ENCODE measurements at regions of chr10 and their contacts with region 1.

Region 1: DNA sequence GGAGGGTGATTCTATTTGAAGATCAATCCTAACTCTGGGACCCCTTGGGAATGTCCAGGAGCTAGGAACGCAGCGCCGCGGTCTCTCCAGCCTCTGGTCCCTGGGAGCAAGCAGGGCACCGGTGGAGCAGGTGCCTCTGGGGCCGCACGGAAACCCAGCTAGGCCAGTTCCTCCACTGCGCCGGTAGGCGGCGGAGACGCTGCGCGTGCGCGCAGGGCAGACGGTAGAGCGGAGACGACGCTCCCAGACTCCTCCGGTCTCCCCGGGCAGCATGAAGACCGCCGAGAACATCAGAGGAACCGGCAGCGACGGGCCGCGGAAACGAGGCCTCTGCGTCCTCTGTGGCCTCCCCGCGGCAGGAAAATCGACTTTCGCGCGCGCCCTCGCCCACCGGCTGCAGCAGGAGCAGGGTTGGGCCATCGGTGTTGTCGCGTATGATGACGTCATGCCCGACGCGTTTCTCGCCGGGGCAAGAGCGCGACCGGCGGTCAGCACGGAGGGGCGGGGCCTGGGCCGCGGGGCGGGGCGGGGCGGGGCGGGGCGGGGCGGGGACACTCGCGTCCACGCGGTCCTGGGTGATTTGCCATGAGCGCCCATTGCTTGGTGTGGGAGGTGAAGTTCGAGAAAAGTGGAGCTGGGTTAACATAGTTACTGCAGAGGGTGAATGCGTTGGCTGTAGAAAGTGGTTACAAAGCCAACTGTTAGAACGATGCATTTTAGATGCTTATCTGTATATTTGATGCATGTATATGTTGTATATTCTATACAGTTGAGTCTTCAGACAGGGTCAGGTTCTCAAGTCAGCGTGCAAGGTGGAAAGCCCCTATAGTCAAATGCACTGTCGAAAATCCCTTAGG is at the start of gene PSTK:
- DNase-seq: peak; percentile 92
- H3K4me3 ChIP-seq: peak within 1 kb of the TSS; percentile 36 to 80 (median 55)
- H3K27ac ChIP-seq: peak within 1 kb of the TSS; percentile 82
- H3K4me1 ChIP-seq: peaks cover 8% of the 10 kb centered on the region
- H3K27me3 ChIP-seq: peaks cover 0 to 1% of the 10 kb centered on the region in 2 experiments
- CTCF ChIP-seq: peak; percentile 84 to 97
- POLR2A ChIP-seq: peak; percentile 56
- total RNA-seq, gene PSTK: 1.6 and 2.7 TPM in 2 replicates

Region 2: DNA sequence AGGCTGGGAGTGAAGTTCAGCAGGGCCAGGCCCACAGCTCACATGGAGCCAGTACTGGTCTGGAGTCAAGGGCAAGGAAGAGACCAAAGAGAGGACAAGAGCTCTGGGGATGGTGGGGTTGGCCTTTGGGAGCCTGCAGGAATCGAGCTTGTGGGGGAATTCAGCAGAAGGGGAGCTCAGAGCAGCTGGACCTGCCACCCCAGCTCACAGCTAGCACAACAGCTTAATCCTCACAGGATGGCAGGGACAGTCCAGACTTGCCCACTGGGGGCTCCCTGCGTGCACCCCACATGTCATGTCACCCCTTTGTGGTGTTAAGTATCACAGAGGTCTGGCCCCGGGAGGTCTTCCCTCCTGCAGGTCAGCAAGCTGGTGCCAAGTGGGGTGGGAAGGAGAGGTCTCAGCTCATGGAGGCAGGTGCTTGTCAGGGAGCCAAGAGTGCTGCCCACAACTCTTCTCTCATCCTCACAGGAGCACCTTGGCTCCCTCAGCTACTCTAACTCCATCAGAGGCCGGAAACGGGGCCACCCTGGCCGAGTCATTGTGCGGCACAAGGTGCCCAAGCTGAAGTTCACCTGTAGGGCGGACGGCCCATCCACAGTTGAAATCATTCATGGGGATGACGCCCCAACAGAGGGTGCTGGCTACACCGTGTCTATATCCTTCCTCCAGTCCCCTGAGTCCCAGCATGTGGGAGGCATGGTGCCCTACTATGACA is 157.3 kb before region 1 on chr10:
- CTCF ChIA-PET with region 1: no interaction called
- POLR2A ChIA-PET with region 1: no interaction called
- dilution Hi-C with region 1: no loop called
- intact Hi-C with region 1: no loop called
- DNase-seq: no peak
- H3K4me3 ChIP-seq: no peak overlapping the region
- H3K27ac ChIP-seq: no peak overlapping the region
- H3K4me1 ChIP-seq: no peaks in the 10 kb centered on the region
- H3K27me3 ChIP-seq: peaks cover 2 to 23% of the 10 kb centered on the region in 2 experiments
- CTCF ChIP-seq: no peak
- POLR2A ChIP-seq: no peak

Region 3: DNA sequence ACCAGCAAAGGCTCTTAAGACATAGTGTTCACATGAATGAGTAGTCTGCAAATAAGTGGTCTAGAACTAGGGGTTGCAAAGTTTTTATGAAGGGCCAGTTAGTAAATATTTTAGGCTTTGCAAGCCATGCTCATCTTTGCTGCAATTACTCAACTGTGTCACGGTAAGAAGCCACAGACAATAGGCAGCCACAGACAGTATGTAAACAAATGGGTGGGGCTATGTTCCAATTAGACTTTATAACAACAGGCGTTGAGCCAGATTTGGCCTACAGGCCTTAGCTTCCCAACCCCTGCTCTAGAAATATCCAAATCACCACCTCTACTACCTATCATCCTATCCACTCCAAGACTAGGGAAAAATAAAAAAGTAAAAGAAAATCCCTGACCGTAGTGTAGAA is 18.9 kb after region 1 on chr10:
- CTCF ChIA-PET with region 1: interaction called, 11 read pairs
- POLR2A ChIA-PET with region 1: no interaction called
- dilution Hi-C with region 1: no loop called
- intact Hi-C with region 1: no loop called
- DNase-seq: no peak
- H3K4me3 ChIP-seq: no peak overlapping the region
- H3K27ac ChIP-seq: no peak overlapping the region
- H3K4me1 ChIP-seq: peaks cover 4% of the 10 kb centered on the region
- H3K27me3 ChIP-seq: no peaks in the 10 kb centered on the region
- CTCF ChIP-seq: no peak
- POLR2A ChIP-seq: no peak

Region 4: GRCh38 chr10:123154092-123154921 is 173.9 kb after region 1 on chr10 and contains the start of gene BUB3:
- CTCF ChIA-PET with region 1: no interaction called
- POLR2A ChIA-PET with region 1: no interaction called
- dilution Hi-C with region 1: no loop called
- intact Hi-C with region 1: loop called (anchors 1 kb)
- DNase-seq: peak; percentile 100
- H3K4me3 ChIP-seq: peak within 1 kb of the TSS; percentile 61 to 92 (median 90)
- H3K27ac ChIP-seq: peak within 1 kb of the TSS; percentile 81
- H3K4me1 ChIP-seq: peaks cover 48% of the 10 kb centered on the region
- H3K27me3 ChIP-seq: peaks cover 35 to 41% of the 10 kb centered on the region in 2 experiments
- CTCF ChIP-seq: no peak
- POLR2A ChIP-seq: peak; percentile 91
- total RNA-seq, gene BUB3: 178 and 193 TPM in 2 replicates